ENCODE measurements at regions of chr19 and their contacts with region 1.

Region 1: DNA sequence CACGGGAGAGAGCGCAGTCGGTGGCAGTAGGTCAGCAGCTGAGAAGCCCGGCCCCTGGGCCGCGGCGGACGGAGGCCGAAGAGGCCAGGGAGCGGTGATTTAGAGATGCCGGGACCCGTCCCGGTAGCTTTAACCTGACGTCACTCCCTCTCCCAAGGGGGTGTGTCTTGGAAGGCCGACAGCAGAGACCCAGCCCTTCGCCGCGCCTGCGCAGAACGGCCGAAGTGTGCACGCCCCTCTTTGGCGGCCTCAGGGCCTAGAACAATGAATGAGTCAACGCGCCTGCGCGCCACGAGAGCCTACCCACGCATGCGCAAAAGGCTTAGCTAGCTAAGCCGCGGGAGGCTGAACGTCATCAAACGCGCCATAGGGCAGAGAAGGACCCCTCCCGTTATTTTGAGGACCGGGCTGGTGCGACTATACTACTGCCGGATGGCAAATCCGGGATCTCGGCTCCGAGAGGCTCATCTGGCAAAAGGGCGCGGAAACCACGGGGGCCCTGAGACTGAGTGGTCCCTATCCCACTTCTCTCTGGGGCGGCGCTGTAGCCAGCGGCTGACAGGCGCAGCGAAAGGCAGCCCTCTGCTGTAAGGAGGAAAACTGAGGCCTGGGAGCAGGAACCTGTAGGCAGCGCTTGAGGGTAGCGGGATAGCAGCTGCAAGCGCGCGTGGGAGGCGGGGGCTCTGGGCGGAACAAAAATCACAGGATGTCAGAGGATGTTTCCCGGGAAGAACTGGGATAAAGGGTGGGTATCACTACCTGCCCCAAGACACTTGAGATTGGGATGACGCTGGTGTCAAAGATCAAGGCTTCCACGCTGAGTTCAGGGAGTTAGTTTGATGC is at the starts of genes IRGQ and ZNF576:
- DNase-seq: peak; percentile 98
- ATAC-seq: peak; percentile 81
- H3K4me3 ChIP-seq: peak within 1 kb of the TSS; percentile 74 to 90 (median 84)
- H3K27ac ChIP-seq: peak within 1 kb of the TSS; percentile 94
- H3K4me1 ChIP-seq: peaks cover 19% of the 10 kb centered on the region
- H3K27me3 ChIP-seq: no peaks in the 10 kb centered on the region; a peak in 1 of 5 replicates
- CTCF ChIP-seq: peak; percentile 65
- EP300 ChIP-seq: no peak
- POLR2A ChIP-seq: peak; percentile 74 to 78
- RAD21 ChIP-seq: peak; percentile 55
- total RNA-seq, gene IRGQ: 12.4 and 16.5 TPM in 2 replicates
- total RNA-seq, gene ZNF576: 9.6 and 10.9 TPM in 2 replicates

Region 2: GRCh38 chr19:43463381-43464136 is 132.7 kb before region 1 on chr19:
- CTCF ChIA-PET with region 1: no interaction called
- POLR2A ChIA-PET with region 1: no interaction called
- in situ Hi-C with region 1: no loop called
- intact Hi-C with region 1: no loop called
- DNase-seq: peak; percentile 85
- ATAC-seq: peak; percentile 87
- H3K4me3 ChIP-seq: peak overlapping the region; percentile 70 to 84 (median 73)
- H3K27ac ChIP-seq: peak overlapping the region; percentile 64
- H3K4me1 ChIP-seq: peaks cover 52% of the 10 kb centered on the region
- H3K27me3 ChIP-seq: no peaks in the 10 kb centered on the region
- CTCF ChIP-seq: no peak
- EP300 ChIP-seq: no peak
- POLR2A ChIP-seq: peak in 1 of 2 experiments; percentile 47; a peak in 2 of 4 replicates
- RAD21 ChIP-seq: 0 out of 2 replicates have a peak, but pooled peaks have one; percentile 17

Region 3: DNA sequence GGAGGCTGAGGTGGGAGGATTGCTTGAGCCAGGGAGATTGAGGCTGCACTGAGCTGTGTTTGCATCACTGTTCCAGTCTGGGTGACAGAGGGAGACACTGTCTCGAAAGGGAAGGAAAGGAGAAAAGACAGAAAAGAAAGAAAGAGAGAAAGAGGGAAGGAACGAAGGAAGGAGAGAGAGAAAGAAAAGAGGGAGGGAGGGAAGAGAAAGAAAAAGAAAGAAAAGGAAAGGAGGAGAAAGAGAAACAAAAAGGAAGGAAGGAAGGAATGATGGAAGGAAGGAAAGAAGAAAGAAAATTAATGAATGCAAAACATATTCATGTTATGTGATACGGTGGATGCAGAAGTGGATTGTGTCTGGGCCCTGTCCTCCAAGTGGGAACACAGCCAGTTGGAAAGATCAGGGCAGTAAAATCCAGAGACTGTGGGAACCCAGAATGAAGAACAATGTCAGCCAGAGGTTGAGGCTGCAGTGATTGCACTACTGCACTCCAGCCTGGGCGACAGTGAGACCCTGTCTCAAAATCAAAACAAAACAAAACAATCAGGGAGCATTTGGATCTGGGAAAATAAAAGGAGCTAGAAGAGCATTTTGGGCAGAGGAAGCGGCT is 97.9 kb before region 1 on chr19:
- CTCF ChIA-PET with region 1: no interaction called
- POLR2A ChIA-PET with region 1: no interaction called
- in situ Hi-C with region 1: no loop called
- intact Hi-C with region 1: no loop called
- DNase-seq: no peak
- ATAC-seq: no peak
- H3K4me3 ChIP-seq: 0 out of 6 replicates have a peak overlapping the region, but pooled peaks of 1 of the 3 experiments have one; percentile 45
- H3K27ac ChIP-seq: peak overlapping the region; percentile 71
- H3K4me1 ChIP-seq: peaks cover 42% of the 10 kb centered on the region
- H3K27me3 ChIP-seq: no peaks in the 10 kb centered on the region
- CTCF ChIP-seq: no peak
- EP300 ChIP-seq: no peak
- POLR2A ChIP-seq: no peak
- RAD21 ChIP-seq: no peak

Region 4: DNA sequence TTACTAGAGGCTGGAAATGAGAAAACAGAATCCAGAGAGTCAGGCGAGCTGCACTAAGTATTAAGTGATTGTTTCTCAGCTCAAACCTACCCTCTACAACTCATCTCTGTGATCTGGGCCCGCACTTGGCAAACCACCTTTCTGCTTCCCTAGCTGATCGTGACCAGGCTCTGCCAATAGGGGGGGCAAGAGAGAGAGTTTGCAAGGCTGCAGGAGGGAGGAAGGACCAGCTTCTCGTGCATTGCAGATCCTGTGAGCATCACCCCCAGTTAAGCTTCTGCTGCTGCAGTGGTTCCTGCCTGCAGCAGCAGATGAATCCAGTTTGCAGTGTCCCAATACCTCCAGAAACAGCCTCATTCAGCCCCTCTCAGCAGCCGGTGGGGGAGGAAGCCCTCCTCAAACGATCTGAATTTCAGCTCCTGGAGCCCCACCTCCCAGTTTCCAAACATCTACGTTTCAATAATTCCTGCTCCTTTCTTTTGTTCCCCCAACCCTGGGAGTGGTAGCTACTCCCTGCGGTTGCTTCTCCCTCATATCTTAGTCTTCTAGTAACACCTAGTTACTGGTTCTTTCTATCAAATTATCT is 40.9 kb before region 1 on chr19:
- CTCF ChIA-PET with region 1: interaction called, 13 read pairs
- POLR2A ChIA-PET with region 1: no interaction called
- in situ Hi-C with region 1: no loop called
- intact Hi-C with region 1: no loop called
- DNase-seq: peak; percentile 62
- ATAC-seq: peak; percentile 88
- H3K4me3 ChIP-seq: no peak overlapping the region
- H3K27ac ChIP-seq: no peak overlapping the region
- H3K4me1 ChIP-seq: no peaks in the 10 kb centered on the region
- H3K27me3 ChIP-seq: no peaks in the 10 kb centered on the region
- CTCF ChIP-seq: peak; percentile 84
- EP300 ChIP-seq: no peak
- POLR2A ChIP-seq: no peak
- RAD21 ChIP-seq: 0 out of 2 replicates have a peak, but pooled peaks have one; percentile 36

Region 5: GRCh38 chr19:43584484-43584883 is 11.7 kb before region 1 on chr19:
- CTCF ChIA-PET with region 1: no interaction called
- POLR2A ChIA-PET with region 1: interaction called, 15 read pairs
- in situ Hi-C with region 1: no loop called
- intact Hi-C with region 1: no loop called
- DNase-seq: no peak
- ATAC-seq: peak; percentile 75
- H3K4me3 ChIP-seq: no peak overlapping the region
- H3K27ac ChIP-seq: peak overlapping the region; percentile 57
- H3K4me1 ChIP-seq: peaks cover 15% of the 10 kb centered on the region
- H3K27me3 ChIP-seq: no peaks in the 10 kb centered on the region
- CTCF ChIP-seq: no peak
- EP300 ChIP-seq: no peak
- POLR2A ChIP-seq: no peak
- RAD21 ChIP-seq: no peak

Region 6: GRCh38 chr19:43651758-43652545 is 55.7 kb after region 1 on chr19:
- CTCF ChIA-PET with region 1: interaction called, 12 read pairs
- POLR2A ChIA-PET with region 1: no interaction called
- in situ Hi-C with region 1: loop called (anchors 5 kb)
- intact Hi-C with region 1: loop called (anchors 2 kb)
- DNase-seq: peak; percentile 75
- ATAC-seq: peak; percentile 93
- H3K4me3 ChIP-seq: peak overlapping the region; percentile 59 to 75 (median 69)
- H3K27ac ChIP-seq: peak overlapping the region; percentile 62
- H3K4me1 ChIP-seq: peaks cover 8% of the 10 kb centered on the region
- H3K27me3 ChIP-seq: no peaks in the 10 kb centered on the region
- CTCF ChIP-seq: peak; percentile 93
- EP300 ChIP-seq: no peak
- POLR2A ChIP-seq: no peak
- RAD21 ChIP-seq: peak; percentile 80

Region 7: GRCh38 chr19:43774103-43774939 is 178.1 kb after region 1 on chr19:
- CTCF ChIA-PET with region 1: no interaction called
- POLR2A ChIA-PET with region 1: no interaction called
- in situ Hi-C with region 1: no loop called
- intact Hi-C with region 1: no loop called
- DNase-seq: peak; percentile 63
- ATAC-seq: peak; percentile 95
- H3K4me3 ChIP-seq: peak overlapping the region; percentile 5 to 68 (median 56); a peak in 5 of 6 replicates
- H3K27ac ChIP-seq: no peak overlapping the region
- H3K4me1 ChIP-seq: peaks cover 21% of the 10 kb centered on the region
- H3K27me3 ChIP-seq: peaks cover 1 to 17% of the 10 kb centered on the region in 2 experiments; a peak in 3 of 5 replicates
- CTCF ChIP-seq: peak; percentile 87
- EP300 ChIP-seq: no peak
- POLR2A ChIP-seq: no peak
- RAD21 ChIP-seq: peak; percentile 73

Measured in HepG2 (cell line).